Activated CD4-positive, alpha-beta memory T cell treated with anti-CD3 and anti-CD28 coated beads, Interleukin-2, amount 10 ng/mL, durations not matched to agents 7 days and 5 days (primary cell): ENCODE measurements at regions of chr10 and their contacts with region 1.

Region 1: DNA sequence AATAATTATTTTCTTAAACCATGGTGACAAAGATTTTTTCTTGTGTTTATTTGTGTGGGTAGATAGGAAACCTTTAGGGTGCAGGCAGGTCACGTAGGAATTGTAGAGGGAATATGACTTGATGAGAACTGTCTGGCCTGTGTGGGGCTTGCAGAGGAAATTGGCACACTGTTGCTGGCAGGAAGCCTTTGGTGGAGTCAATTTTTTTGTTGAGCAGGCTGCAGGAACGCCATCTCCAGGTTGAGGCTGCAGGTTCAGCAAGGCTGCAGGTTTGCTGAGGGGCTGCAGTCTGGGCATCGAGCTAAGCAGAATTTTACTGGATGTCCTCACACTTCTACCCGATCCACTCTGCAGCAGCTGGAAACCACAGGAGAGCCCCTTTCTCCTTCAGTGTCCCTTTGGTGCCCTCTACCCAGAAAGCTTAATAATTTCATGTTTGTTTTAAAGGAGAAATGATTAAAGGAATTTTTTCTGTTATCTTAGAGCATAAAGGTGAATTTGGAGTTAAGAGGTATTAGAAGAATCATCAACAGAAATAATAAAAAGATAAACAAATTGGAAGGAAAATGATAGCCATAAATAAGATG is 37.0 kb downstream of the TBC1D12 start:
- DNase-seq: no peak
- H3K4me3 Mint-ChIP-seq: no peak overlapping the region
- H3K27ac Mint-ChIP-seq: no peak overlapping the region
- H3K4me1 Mint-ChIP-seq: no peaks in the 10 kb centered on the region
- H3K27me3 Mint-ChIP-seq: peaks cover 24% of the 10 kb centered on the region

Region 2: DNA sequence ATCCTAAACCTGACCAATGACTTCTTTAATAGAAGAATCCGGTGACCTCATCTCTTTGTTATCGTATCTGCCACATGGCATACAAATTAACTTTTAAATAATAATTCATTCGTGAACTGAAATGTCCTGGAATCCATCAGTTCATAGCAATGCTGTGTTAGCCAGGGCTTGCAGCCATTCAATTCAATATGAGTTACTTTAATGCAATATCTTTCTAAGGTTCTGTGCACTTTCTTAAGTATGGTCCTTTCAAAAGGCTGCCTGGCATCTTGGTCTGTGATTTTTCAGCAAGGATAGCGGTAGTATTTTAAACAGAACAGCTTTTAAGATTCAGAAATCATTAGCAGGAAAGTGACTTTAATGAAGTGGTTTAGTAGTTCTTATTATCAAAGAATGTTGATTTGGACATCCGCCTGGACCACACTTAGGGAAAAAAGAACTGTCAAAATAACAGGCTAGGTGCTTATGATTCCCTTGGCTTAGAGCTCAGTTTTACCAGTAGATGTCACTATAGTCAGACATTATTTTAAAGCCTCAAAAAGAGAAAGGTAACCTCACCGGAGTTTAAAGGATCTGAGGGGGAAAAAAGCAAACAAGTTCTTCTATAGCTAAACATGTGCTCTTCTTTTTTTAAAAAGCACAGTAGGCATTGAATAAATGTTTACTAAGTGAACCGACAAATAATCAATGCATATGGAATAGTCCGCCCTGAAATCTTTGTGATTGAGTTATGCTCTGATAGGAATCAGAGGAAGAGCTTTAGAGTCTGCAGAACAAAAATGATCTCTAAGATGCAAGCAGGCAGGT is 522.9 kb before region 1 on chr10:
- CTCF ChIA-PET with region 1: interaction called, 10 read pairs
- POLR2A ChIA-PET with region 1: no interaction called
- DNase-seq: no peak
- H3K4me3 Mint-ChIP-seq: no peak overlapping the region
- H3K27ac Mint-ChIP-seq: no peak overlapping the region
- H3K4me1 Mint-ChIP-seq: no peaks in the 10 kb centered on the region
- H3K27me3 Mint-ChIP-seq: no peaks in the 10 kb centered on the region

Region 3: DNA sequence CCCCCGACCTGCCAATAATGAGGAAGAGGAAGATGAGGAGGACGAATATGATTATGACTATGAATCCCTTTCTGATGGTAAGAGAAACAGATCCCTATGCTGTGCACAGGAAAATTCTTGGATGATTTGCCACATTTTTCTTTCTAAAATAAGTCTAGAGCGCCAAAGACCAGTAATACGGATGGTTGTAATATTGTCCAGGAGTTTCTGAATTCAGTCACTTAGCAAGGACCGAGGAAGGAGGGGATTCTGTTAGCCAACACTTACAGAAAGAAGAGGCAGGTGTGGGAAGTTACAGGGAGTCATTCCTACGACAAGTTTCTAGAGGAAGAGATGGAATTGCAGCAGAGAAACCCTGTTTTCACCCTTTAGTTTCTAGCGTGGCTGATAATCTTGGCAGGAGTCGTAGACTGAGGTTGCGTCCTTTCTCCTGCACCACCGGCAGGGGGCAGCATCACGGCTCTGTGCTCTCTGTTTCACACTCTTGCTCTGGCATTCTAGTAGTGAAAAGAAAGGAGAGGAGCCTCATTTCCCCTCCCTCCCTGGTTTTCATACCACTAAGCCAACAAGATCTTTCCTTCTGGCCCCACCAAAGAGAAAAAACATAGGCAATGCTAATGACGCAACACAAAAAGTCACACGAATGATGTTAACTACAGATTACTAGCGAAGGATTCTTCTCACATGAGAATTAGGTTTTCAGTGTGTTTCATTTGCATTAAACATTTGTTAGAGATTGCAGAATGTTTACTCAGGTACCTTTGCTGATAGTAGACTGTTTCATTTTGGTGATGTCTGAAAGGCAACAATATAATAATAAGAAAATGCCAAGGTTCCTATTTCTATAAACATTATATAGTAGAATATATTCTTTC is 159.3 kb before region 1 on chr10:
- CTCF ChIA-PET with region 1: interaction called, 14 read pairs
- POLR2A ChIA-PET with region 1: no interaction called
- DNase-seq: peak; percentile 64
- H3K4me3 Mint-ChIP-seq: no peak overlapping the region
- H3K27ac Mint-ChIP-seq: no peak overlapping the region
- H3K4me1 Mint-ChIP-seq: peaks cover 14% of the 10 kb centered on the region
- H3K27me3 Mint-ChIP-seq: peaks cover 22% of the 10 kb centered on the region

Region 4: DNA sequence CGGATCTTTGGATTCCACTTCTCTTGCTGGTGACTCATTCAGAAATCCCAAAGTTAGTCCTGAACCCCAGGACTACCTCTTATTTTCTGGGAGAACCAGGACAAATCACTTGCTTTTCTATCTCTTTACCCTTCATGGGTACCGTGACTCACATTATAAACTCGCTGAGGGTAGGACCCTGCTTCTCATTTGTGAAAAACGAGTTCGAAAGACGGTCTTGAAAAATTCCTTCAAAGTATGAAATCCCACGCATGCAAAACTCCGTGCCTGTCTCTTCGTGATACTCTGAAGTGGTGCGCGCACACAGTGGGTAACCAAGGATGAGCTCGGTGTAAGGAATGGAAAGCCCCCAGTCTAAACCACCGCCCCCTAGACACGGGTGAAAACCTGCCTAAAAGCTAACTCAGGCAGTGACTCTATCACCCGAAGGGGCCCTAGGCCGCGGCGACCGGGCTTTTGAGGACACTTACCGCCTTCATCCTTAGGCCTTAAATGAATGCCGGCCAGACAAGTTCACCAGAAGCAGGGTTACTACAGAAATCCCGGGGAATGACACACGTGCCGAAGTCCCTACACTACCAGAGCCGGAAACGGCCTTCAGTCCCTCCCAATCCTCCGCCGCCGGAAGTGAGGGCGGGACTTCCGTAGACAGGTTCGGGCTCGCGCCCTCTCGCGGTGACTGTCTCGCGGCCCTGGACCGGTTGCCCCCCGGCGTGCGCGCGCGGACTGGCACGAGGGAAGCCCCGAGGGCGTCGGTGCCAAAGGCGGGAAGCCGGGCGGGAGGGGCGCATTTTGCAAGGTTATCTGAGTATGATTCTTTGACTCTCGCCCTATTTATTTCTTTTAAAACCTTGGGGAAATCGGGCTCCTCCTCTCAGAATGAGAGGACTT is 76.8 kb before region 1 on chr10 and contains the start of gene NOC3L:
- CTCF ChIA-PET with region 1: interaction called, 16 read pairs
- POLR2A ChIA-PET with region 1: no interaction called
- DNase-seq: peak; percentile 94
- H3K4me3 Mint-ChIP-seq: peak within 1 kb of the TSS; percentile 96
- H3K27ac Mint-ChIP-seq: peak within 1 kb of the TSS; percentile 80
- H3K4me1 Mint-ChIP-seq: peaks cover 45% of the 10 kb centered on the region
- H3K27me3 Mint-ChIP-seq: peaks cover 14% of the 10 kb centered on the region
- total RNA-seq, gene NOC3L: 18.6 TPM

Region 5: DNA sequence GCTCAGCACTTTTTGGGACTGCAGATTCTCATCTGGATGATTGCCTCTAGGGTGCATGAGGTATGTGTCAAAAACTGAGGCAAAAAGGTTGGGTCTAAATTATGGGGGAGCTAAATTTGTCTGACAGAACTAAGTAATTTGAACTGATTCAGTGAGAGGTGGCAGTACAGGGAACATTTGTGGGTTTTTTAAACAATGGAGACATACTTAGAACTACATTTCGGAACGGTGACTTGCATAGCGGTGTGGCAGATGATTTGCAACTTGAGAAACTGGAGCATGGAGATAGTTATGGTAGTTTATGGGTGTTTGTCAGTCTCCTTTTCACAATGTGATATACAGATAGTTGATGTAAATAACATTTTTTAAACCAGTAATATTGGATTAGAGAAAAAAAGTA is 22.5 kb before region 1 on chr10:
- CTCF ChIA-PET with region 1: no interaction called
- POLR2A ChIA-PET with region 1: no interaction called
- DNase-seq: no peak
- H3K4me3 Mint-ChIP-seq: no peak overlapping the region
- H3K27ac Mint-ChIP-seq: no peak overlapping the region
- H3K4me1 Mint-ChIP-seq: no peaks in the 10 kb centered on the region
- H3K27me3 Mint-ChIP-seq: peaks cover 19% of the 10 kb centered on the region